Left cardiac atrium (tissue), 4 donors: ENCODE measurements at regions of chr6 and their contacts with region 1.

Region 1: DNA sequence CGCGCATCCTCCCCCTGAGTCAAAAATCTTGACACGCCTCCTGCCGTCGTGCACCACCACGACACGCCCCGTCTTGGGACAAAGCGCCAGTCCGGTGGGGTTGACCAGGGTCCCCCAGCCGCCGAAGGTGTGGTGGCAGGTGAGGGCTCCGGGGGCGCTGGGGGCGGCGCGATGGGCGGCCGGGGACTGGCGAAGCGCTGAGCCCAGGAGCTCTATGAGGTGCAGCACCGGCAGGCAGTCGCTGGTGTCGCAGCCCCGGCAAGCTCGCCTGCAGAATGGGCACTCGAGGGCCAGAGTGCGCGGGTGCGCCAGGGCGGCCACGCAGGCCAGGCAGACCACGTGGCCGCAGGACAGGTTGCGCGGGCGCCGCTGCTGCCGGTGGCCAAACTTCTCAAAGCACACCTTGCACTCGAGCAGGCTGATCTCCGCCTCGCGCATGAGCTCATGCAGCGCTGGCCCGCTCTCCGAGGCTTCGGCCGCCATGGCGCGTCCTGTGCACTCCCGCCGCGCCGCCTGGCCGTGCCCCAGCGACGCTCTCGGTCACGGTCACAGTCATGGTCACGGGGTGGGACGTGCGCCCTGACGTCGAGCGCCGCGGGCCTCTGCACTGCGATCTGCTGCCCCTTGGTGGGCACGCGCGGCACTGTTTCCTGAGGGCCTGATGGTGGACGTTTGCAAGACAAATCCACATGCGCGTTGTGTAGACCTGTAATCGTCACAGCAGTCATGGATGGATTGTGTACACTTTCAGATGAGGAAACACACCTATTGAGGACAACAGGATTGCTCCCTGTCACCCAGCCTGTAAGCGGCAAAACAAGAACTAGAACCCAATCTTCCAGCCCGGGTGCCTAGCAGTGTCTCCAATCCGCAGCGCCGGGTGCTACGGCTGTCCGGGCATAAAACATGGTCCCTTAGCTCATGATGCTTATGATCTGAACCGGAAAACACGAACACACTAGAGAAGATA is at the start of gene NHLRC1:
- DNase-seq: peak; percentile 93
- ATAC-seq: peak; percentile 99 to 100
- total RNA-seq, gene NHLRC1: 1.6 to 1.9 TPM

Region 2: DNA sequence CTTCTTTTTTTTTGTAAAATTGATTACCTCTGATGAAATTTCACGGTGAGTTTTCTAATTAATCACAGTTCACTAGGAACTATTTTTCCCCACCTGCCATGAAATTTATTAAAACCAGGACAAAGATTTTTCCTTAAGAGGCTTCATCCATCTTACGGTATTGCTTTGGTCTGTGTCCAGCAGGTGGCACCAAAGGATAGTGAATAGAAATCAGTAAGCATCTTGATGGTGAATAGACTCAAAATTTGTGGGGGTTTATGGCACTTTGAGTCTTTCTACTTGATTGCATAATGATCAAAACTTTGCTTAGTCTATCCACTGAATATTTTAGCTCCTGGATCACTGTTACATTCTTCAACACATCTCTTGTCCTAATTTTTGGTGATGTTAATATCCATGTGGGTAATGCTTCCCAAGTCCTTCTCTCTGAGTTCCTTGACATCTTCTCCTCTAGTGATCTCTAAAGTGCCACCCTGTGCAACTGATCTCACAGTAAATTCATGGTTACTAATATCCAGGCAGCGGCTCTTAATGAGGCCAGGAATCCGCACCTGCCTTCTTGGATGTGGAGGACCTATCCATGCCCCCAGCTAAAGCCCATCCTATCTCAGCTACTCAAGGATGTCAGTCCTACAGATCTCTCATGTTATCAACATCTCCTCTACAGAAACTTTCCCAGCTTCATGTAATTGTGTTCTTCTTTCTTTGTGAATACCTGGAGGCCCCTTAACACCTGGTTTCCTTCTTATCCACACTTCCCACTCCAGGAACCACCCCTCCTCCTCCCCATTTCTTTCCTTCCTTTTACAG is 966.1 kb before region 1 on chr6:
- intact Hi-C with region 1: loop called in 1 of 2 experiments (anchors 5 kb)
- DNase-seq: peak; percentile 54
- ATAC-seq: peak in 1 of 2 donors; percentile 48

Region 3: GRCh38 chr6:17816921-17817611 is 305.3 kb before region 1 on chr6:
- intact Hi-C with region 1: loop called in 1 of 2 experiments (anchors 5 kb)
- DNase-seq: no peak
- ATAC-seq: no peak

Region 4: GRCh38 chr6:17831135-17831534 is 291.3 kb before region 1 on chr6:
- intact Hi-C with region 1: loop called (anchors 5 kb)
- DNase-seq: no peak
- ATAC-seq: peak; percentile 72 to 90

Region 5: DNA sequence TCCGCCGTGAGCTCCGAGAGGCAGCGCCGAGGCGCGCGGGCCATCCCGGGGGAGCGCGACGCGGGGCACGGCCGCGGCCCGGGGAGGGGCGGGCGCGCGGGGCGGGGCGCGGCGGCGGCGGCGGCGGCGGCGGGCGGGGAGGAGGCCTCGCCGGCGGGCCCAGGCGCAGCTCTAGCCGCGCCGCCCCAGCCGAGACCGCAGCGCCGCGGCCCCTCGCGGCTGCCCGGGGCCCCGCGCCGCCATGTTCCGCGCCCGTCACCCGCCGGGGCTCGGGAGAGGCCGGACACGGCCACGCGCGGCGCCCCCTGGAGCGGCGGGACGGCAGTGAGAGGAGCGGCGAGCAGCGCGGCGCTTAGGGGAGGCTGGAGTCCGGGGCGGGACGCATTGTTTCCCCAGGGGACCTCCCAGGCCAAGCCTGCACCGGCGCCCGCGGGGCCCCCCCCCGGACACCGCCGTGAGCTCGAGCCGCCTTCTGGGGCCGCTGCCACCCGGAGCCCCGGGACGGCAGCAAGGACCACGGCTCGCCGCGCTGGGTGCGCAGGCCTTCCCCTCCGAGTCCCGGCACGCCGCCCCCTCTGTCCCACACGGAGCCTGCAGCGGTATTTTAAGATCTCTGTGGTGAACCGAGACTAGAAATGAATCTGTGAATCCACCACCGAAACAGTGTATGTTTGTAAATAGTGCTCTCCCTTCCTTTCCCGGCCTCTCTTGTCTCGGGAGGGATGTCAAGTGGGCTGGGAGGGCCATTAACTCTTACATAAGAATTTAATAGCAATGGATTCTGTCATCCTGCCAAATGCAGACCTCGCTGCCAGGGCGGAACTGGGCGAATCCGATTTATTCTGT is 134.6 kb before region 1 on chr6 and contains the start of gene KIF13A:
- intact Hi-C with region 1: loop called (anchors 5 to 10 kb)
- DNase-seq: peak; percentile 77
- ATAC-seq: peak; percentile 82 to 83
- total RNA-seq, gene KIF13A: 60.5 to 64.7 TPM

Region 6: DNA sequence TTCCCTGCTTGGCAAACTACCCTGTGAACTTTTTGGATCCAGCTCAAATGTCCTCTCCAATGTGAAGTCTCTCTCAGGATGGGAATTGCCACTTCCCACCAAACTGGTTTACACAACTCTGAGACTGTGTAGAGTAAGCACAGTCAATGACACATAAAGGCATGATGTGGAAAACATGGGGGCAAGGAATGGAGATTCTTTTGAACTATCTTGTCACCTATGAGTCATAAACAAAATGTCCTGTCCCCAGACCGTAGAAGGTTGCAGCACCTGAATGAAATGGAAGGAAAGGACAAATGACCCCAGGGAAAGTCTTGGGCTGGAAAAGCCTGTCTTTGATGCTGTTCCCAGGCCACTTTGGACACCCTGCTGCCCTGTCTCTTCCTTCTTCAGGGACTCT is 124.0 kb before region 1 on chr6:
- intact Hi-C with region 1: loop called in 1 of 2 experiments (anchors 10 kb)
- DNase-seq: no peak
- ATAC-seq: no peak

Region 7: DNA sequence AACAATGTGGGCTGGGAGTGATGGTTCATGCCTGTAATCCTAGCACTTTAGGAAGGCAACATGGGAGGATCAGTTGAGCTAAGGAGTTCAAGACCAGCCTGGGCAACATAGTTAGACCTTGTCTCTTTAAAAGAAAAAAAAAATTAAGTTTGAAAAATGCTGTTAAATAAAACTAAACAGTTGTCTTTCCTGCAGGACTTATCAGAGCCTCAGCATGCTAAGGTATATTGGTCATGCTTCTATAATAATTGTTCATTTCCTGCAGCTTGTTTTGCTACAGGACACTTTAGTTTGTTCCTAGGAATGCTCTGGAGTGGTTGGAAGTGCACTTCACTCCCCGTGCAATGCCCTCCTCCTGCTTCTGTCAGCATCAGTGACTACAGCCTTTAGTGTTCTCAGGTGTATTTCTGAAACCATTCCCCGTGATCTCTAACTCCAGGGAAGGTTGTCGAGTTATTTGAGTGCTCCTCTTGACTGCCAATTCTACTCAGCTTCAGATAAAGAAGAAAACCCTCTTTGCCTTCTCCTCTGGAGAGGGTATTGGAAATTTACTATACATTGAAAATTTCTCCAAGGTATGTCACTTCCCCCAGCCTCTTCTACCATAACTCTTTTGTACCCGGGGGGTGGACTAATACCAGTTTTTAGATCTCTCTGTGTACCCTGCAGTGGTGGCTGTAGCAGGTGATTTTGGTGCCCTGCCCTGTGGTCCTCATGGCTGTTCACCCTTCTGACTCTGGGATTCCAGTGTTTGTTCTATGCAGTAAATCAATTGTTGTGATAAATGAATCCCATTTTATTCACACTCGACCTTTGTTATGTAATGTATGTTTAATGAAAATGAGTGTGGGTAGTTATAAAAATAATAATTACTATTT is 33.8 kb before region 1 on chr6:
- intact Hi-C with region 1: no loop called
- DNase-seq: no peak
- ATAC-seq: no peak

Region 8: DNA sequence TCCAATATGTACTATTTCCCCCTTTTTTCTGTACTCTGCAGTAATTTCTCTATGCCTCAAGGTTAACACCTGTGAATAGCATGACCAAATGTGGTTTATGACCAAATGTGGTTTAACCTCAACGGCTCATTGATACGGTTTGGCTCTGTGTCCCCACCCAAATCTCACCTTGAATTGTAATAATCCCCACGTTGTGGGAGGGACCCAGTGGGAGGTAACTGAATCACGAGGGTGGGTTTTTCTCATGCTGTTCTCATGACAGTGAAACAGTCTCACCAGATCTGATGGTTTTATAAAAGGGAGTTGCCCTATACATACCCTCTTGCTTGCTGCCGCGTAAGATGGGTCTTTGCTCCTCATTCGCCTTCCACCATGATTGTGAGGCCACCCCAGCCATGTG is 123.2 kb after region 1 on chr6:
- intact Hi-C with region 1: no loop called
- DNase-seq: no peak
- ATAC-seq: no peak

Region 9: GRCh38 chr6:18724056-18724455 is 601.6 kb after region 1 on chr6:
- intact Hi-C with region 1: no loop called
- DNase-seq: no peak
- ATAC-seq: no peak